ENCODE measurements at regions of chr16 and their contacts with region 1.

Region 1: GRCh38 chr16:27549859-27550581 is at the starts of genes GTF3C1 and KATNIP:
- DNase-seq: peak; percentile 100
- H3K4me3 Mint-ChIP-seq: peak within 1 kb of the TSS; percentile 92
- H3K27ac Mint-ChIP-seq: peak within 1 kb of the TSS; percentile 89
- H3K4me1 Mint-ChIP-seq: peaks cover 35% of the 10 kb centered on the region
- H3K27me3 Mint-ChIP-seq: peaks cover 1% of the 10 kb centered on the region
- total RNA-seq, gene GTF3C1: 54.3 and 56.5 TPM in 2 replicates
- total RNA-seq, gene KATNIP: 17.5 and 18.0 TPM in 2 replicates

Region 2: DNA sequence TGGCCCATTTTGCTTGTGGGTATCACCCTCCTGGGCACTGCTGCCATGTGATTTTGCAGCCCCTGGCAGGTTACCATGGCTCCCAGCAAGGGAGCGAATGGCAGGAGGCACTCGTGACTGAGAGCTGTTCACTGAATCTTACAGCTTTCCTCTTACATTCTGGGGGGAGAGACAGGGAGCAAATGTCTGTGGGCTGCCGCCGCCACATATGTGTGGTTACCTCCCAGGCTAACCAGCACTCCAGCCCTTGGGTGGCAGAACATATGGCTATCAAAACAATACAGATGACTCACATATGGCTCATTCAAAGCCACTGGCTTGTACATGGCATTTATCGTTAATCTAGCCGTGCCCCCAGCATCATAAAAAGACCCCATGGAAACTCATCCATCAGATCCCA is 20.1 kb before region 1 on chr16:
- intact Hi-C with region 1: no loop called
- DNase-seq: no peak
- H3K4me3 Mint-ChIP-seq: no peak overlapping the region
- H3K27ac Mint-ChIP-seq: peak overlapping the region; percentile 26
- H3K4me1 Mint-ChIP-seq: peaks cover 17% of the 10 kb centered on the region
- H3K27me3 Mint-ChIP-seq: no peaks in the 10 kb centered on the region

Region 3: DNA sequence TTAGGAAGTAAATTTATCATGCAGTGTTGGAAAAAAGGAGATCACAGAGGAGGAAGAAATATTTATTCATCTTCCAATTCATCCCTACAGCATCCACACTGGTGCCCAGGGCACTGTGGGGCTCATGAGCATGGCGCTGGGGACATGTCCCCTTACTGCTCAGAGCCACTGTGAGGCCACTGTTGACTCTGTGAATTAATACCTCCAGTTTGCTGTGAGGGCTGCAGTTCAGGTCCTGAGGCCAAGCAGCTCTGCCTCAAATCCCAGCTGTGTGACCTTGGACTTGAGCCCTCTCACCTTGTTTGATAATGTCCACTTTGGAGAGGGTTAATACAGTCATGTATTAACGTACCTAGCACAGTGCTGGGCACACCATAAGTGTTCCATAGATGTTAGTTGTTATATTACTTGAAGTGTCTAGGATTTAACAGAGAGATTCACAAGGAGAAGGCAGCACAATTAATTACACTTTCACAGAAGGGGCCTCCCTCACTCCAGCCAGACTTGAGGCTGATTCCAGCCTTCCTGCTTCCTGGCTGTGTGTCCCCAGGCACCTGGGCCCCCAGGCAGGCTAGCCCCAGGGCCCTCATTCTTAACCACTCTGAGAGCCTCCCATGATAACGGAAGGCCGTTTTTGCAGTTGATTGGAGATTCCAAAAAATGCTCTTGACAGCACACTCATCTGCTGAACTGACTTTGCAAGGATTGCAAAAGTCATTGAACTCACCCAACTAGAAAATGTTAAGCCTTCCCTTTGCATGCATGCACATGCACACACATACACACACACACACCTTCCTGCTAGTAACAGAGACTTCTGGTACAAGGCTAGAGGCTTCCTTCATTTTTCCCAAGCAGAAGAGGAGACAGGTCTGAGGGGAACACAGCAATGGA is 29.3 kb after region 1 on chr16:
- intact Hi-C with region 1: loop called (anchors 1 kb)
- DNase-seq: no peak
- H3K4me3 Mint-ChIP-seq: no peak overlapping the region
- H3K27ac Mint-ChIP-seq: no peak overlapping the region
- H3K4me1 Mint-ChIP-seq: peaks cover 17% of the 10 kb centered on the region
- H3K27me3 Mint-ChIP-seq: no peaks in the 10 kb centered on the region

Region 4: GRCh38 chr16:27781195-27781524 is 231.1 kb after region 1 on chr16:
- intact Hi-C with region 1: no loop called
- DNase-seq: no peak
- H3K4me3 Mint-ChIP-seq: no peak overlapping the region
- H3K27ac Mint-ChIP-seq: no peak overlapping the region
- H3K4me1 Mint-ChIP-seq: no peaks in the 10 kb centered on the region
- H3K27me3 Mint-ChIP-seq: no peaks in the 10 kb centered on the region

Measured in activated CD4-positive, alpha-beta T cell treated with anti-CD3 and anti-CD28 coated beads, Interleukin-2, amount 10 ng/mL, durations not matched to agents 24 days and 14 days (primary cell).